Natural killer cell (primary cell): ENCODE measurements at regions of chr21 and their contacts with region 1.

Region 1: DNA sequence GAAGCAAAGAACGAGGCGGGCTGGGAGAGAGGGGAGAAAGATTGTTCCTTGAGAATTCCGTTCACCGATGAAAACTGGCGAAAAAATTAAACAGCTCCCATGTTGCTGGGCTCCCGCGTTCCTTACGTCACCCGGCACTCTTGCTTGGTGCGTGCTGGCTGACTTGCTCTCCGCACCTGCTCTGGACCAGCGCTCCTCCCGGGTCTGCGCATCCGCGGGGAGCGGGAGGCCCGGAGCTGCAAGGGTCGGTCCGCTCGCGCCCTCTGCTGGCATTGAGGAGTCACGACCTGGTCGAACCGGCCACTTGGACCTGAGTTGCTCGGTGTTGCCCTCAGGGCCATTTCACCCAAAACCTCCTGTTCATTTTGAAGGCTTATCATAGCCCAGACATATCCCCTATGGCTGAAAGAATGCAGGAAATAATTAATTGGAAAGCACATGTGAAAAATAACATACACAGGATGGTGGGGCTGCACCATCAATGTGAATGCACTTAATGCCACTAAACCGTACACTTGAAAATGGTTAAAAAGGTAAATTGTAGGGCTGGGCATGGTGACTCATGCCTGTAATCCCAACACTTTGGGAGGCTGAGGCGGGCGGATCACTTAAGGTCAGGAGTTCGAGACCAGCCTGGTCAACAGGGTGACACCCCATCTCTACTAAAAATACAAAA is 98.9 kb upstream of the BACE2 start:
- DNase-seq: peak; percentile 70 to 71
- ATAC-seq: peak; percentile 51 to 99 (median 86)
- H3K4me3 ChIP-seq: no peak overlapping the region
- H3K4me3 Mint-ChIP-seq: peak overlapping the region; percentile 32
- H3K27ac ChIP-seq: no peak overlapping the region
- H3K27ac Mint-ChIP-seq: peak overlapping the region in 1 of 2 donors; percentile 82
- H3K4me1 ChIP-seq: peaks cover 7% of the 10 kb centered on the region
- H3K4me1 Mint-ChIP-seq: peaks cover 7 to 9% of the 10 kb centered on the region in 2 donors
- H3K27me3 ChIP-seq: no peaks in the 10 kb centered on the region
- H3K27me3 Mint-ChIP-seq: peaks cover 14 to 17% of the 10 kb centered on the region in 2 donors
- CTCF ChIP-seq: peak; percentile 71

Region 2: GRCh38 chr21:40143822-40144525 is 925.1 kb before region 1 on chr21:
- intact Hi-C with region 1: loop called (anchors 2 kb)
- DNase-seq: peak in 1 of 2 donors; percentile 39
- ATAC-seq: no peak
- H3K4me3 ChIP-seq: no peak overlapping the region
- H3K4me3 Mint-ChIP-seq: no peak overlapping the region
- H3K27ac ChIP-seq: no peak overlapping the region
- H3K27ac Mint-ChIP-seq: no peak overlapping the region
- H3K4me1 ChIP-seq: no peaks in the 10 kb centered on the region
- H3K4me1 Mint-ChIP-seq: no peaks in the 10 kb centered on the region
- H3K27me3 ChIP-seq: no peaks in the 10 kb centered on the region
- H3K27me3 Mint-ChIP-seq: no peaks in the 10 kb centered on the region
- CTCF ChIP-seq: peak; percentile 66

Region 3: GRCh38 chr21:40466893-40467501 is 602.1 kb before region 1 on chr21:
- intact Hi-C with region 1: loop called (anchors 10 kb)
- DNase-seq: no peak
- ATAC-seq: no peak
- H3K4me3 ChIP-seq: no peak overlapping the region
- H3K4me3 Mint-ChIP-seq: no peak overlapping the region
- H3K27ac ChIP-seq: no peak overlapping the region
- H3K27ac Mint-ChIP-seq: no peak overlapping the region
- H3K4me1 ChIP-seq: no peaks in the 10 kb centered on the region
- H3K4me1 Mint-ChIP-seq: no peaks in the 10 kb centered on the region
- H3K27me3 ChIP-seq: no peaks in the 10 kb centered on the region
- H3K27me3 Mint-ChIP-seq: no peaks in the 10 kb centered on the region
- CTCF ChIP-seq: no peak